ENCODE measurements at regions of chr9 and their contacts with region 1.

Region 1: DNA sequence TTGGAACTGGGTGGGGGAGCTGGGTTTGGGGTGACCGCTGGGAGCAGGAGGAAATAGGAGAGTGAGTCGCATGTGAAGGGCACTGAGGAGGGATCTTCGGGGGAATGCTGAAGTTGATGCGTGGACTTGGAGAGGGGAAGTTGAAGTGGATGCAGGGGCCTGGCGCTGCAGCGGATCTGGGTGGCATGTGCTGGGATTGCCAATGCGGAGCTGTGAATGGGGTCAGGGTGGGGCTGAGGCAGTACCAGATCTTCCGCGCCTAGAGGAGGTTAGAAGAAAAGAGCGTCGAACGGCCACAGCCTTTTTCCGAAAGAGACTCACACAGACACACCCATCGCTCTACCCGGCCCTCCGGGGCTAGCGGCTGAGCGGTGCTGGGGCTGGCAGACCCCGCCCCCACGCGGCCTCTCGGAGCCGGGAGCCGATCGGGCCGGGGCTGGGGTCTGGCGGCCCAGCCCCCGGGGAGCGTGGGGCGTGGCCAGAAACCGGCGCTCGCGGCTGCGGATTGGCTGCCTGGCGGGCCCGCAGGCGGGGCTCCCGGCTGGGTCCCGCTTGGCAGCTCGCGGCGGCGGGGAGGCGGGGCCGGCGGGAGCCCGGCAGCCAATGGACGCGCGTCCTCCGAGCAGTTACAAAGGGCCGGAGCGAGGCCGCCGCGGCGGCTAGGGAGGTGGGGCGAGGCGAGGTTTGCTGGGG is at the start of gene TGFBR1:
- DNase-seq: peak; percentile 89
- H3K4me3 Mint-ChIP-seq: peak within 1 kb of the TSS; percentile 89
- H3K27ac Mint-ChIP-seq: peak within 1 kb of the TSS; percentile 80
- H3K4me1 Mint-ChIP-seq: peaks cover 45% of the 10 kb centered on the region
- H3K27me3 Mint-ChIP-seq: no peaks in the 10 kb centered on the region
- total RNA-seq, gene TGFBR1: 13.7 to 16.9 TPM

Region 2: DNA sequence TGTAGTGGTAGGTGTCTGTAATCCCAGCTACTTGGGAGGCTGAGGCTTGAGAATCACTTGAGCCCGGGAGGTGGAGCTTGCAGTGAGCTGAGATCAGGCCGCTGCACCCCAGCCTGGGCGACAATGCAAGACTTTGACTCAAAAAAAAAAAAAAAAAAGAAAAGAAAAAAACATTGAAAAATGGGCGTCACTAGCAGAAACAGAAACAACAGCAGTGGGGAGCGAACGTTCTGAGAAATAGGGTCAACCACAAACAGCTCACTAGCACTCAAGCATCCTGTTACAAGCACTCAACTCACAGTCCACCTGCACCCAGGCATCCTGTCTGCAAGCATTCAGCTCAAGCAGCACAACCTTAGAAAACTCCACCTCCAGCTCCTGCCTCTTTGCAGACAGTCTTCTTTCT is 1002.7 kb before region 1 on chr9:
- CTCF ChIA-PET with region 1: no interaction called
- intact Hi-C with region 1: loop called (anchors 10 kb)
- DNase-seq: peak; percentile 90
- H3K4me3 Mint-ChIP-seq: peak overlapping the region; percentile 65
- H3K27ac Mint-ChIP-seq: peak overlapping the region; percentile 96
- H3K4me1 Mint-ChIP-seq: peaks cover 83% of the 10 kb centered on the region
- H3K27me3 Mint-ChIP-seq: no peaks in the 10 kb centered on the region

Region 3: GRCh38 chr9:98998441-98999151 is 106.0 kb before region 1 on chr9:
- CTCF ChIA-PET with region 1: interaction called, 5 read pairs
- intact Hi-C with region 1: loop called (anchors 1 kb)
- DNase-seq: peak; percentile 69
- H3K4me3 Mint-ChIP-seq: no peak overlapping the region
- H3K27ac Mint-ChIP-seq: no peak overlapping the region
- H3K4me1 Mint-ChIP-seq: peaks cover 21% of the 10 kb centered on the region
- H3K27me3 Mint-ChIP-seq: peaks cover 4% of the 10 kb centered on the region

Region 4: GRCh38 chr9:99076483-99077171 is 28.0 kb before region 1 on chr9:
- CTCF ChIA-PET with region 1: interaction called, 3 read pairs
- intact Hi-C with region 1: loop called (anchors 2 kb)
- DNase-seq: peak; percentile 30
- H3K4me3 Mint-ChIP-seq: no peak overlapping the region
- H3K27ac Mint-ChIP-seq: no peak overlapping the region
- H3K4me1 Mint-ChIP-seq: peaks cover 23% of the 10 kb centered on the region
- H3K27me3 Mint-ChIP-seq: no peaks in the 10 kb centered on the region

Region 5: GRCh38 chr9:99092643-99093491 is 11.7 kb before region 1 on chr9:
- CTCF ChIA-PET with region 1: interaction called, 7 read pairs
- intact Hi-C with region 1: loop called (anchors 1 kb)
- DNase-seq: peak; percentile 60
- H3K4me3 Mint-ChIP-seq: no peak overlapping the region
- H3K27ac Mint-ChIP-seq: peak overlapping the region; percentile 9
- H3K4me1 Mint-ChIP-seq: peaks cover 21% of the 10 kb centered on the region
- H3K27me3 Mint-ChIP-seq: no peaks in the 10 kb centered on the region

Region 6: DNA sequence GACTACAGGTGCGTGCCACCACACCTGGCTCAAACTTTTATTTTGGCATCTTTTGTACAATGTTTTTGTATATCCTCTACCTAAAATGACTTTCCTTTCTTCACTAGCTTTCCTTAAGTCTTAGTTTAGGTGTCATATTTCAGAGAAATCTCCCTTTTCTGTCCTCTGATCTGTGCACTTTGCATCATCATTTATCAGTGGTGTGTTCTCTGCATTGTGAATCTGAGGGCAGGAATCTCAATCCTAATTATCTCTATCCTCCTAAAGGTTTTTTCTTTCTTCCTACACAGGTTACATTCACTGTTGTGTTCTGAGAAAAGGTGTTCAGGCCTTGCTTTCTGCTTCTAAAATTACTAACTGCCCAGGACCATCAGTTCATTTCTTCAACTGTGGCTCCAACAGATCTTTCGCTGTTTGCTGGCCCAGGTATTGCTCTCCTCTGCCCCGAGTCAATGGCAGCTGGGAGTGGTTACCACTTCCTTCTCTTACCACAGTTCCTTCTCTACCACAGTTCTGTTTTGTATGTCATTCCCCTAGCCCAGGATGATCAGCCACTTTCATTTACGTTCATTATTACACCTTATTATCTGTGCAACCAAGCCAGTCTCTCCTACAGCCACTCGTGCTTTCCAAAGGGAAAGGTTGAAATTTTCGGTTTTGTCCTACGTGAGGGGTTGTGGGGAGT is 14.3 kb after region 1 on chr9:
- CTCF ChIA-PET with region 1: interaction called, 5 read pairs
- intact Hi-C with region 1: loop called (anchors 1 kb)
- DNase-seq: peak; percentile 80
- H3K4me3 Mint-ChIP-seq: peak overlapping the region; percentile 70
- H3K27ac Mint-ChIP-seq: peak overlapping the region; percentile 90
- H3K4me1 Mint-ChIP-seq: peaks cover 85% of the 10 kb centered on the region
- H3K27me3 Mint-ChIP-seq: no peaks in the 10 kb centered on the region

Region 7: GRCh38 chr9:99130069-99130468 is 25.5 kb after region 1 on chr9:
- CTCF ChIA-PET with region 1: interaction called, 29 read pairs
- intact Hi-C with region 1: loop called (anchors 1 kb)
- DNase-seq: peak; percentile 20
- H3K4me3 Mint-ChIP-seq: no peak overlapping the region
- H3K27ac Mint-ChIP-seq: peak overlapping the region; percentile 54
- H3K4me1 Mint-ChIP-seq: peaks cover 73% of the 10 kb centered on the region
- H3K27me3 Mint-ChIP-seq: no peaks in the 10 kb centered on the region

Measured in activated naive CD4-positive, alpha-beta T cell treated with anti-CD3 and anti-CD28 coated beads for 36 hours (primary cell).